Aorta (tissue), 5 donors: ENCODE measurements at regions of chr4 and their contacts with region 1.

Region 1: GRCh38 chr4:122914292-122914904 is 8.0 kb downstream of the NUDT6 start:
- DNase-seq: no peak
- ATAC-seq: no peak
- H3K4me3 ChIP-seq: no peak overlapping the region
- H3K27ac ChIP-seq: no peak overlapping the region
- H3K4me1 ChIP-seq: no peaks in the 10 kb centered on the region
- H3K27me3 ChIP-seq: no peaks in the 10 kb centered on the region

Region 2: DNA sequence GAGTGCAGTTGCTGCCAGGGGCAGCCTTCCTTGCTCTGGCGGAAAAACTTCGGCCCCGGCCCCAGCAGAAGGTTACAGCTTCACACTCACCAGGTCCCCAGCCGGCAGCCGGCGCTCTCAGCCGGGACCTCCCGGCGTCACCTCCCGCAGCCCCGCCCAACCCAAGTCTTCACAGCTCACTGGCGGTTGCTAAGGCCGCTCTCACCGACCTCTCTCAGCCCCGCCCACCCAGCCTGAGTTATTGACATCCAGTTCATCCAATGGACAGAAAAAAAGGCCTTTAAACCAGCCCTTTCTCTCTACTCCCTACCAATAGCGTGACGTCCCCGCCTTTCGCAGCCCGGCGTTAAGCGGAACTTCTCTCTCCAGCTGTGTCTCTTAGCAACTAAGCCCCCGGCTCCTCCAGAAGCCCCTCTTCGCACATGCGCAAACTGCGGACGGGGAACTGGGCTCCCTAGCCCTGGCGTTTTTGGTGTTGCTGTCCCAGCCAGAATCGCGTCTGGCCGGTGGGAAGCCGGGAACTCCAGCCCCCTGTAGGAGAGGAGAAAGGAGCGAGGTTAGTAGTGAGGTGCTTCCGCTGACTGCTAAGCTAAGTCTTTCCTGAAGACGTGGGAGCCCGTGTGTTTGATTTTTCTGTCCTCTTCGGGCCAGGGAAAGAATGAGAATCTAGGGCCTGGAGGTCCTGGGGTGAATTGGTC is 181.9 kb before region 1 on chr4 and contains the start of gene BBS12:
- intact Hi-C with region 1: loop called in 1 of 2 experiments (anchors 2 kb)
- DNase-seq: peak; percentile 99
- ATAC-seq: peak; percentile 100
- H3K4me3 ChIP-seq: peak within 1 kb of the TSS; percentile 71 to 84
- H3K27ac ChIP-seq: peak within 1 kb of the TSS; percentile 69 to 74
- H3K4me1 ChIP-seq: no peaks in the 10 kb centered on the region
- H3K27me3 ChIP-seq: no peaks in the 10 kb centered on the region
- total RNA-seq, gene BBS12: 3.2 to 3.8 TPM

Region 3: DNA sequence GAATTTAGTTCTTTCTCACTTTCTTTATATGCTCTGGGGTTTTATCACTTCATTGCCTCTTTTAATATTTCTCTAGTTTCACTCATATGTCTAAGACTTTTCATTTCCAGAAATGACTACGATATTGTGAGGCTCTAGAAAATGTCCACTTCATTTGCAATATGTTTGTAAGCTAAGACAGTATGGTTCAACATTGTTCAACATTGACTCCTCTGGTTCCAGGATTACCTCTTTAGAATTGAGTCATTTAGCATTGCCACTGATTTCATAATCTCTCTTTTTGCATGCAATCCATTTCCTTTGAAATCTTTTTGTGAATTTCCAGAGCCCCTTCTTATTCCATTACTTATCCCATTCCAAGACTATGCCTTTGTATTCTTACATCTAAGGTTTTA is 149.6 kb before region 1 on chr4:
- intact Hi-C with region 1: loop called in 1 of 2 experiments (anchors 5 kb)
- DNase-seq: no peak
- ATAC-seq: no peak
- H3K4me3 ChIP-seq: no peak overlapping the region
- H3K27ac ChIP-seq: no peak overlapping the region
- H3K4me1 ChIP-seq: peaks cover 0 to 2% of the 10 kb centered on the region in 2 donors
- H3K27me3 ChIP-seq: no peaks in the 10 kb centered on the region